ENCODE measurements at regions of chr2 and their contacts with region 1.

Region 1: GRCh38 chr2:44981136-44982108 is 27.8 kb downstream of the SIX2 start:
- DNase-seq: peak; percentile 18 to 62 (median 42)
- ATAC-seq: peak; percentile 64
- H3K4me3 ChIP-seq: no peak overlapping the region
- H3K4me3 Mint-ChIP-seq: peak overlapping the region in 1 of 10 donors; percentile 38
- H3K27ac ChIP-seq: no peak overlapping the region
- H3K27ac Mint-ChIP-seq: no peak overlapping the region
- H3K4me1 ChIP-seq: no peaks in the 10 kb centered on the region
- H3K4me1 Mint-ChIP-seq: peaks cover 0 to 6% (median 0%) of the 10 kb centered on the region in 7 donors
- H3K27me3 ChIP-seq: no peaks in the 10 kb centered on the region
- H3K27me3 Mint-ChIP-seq: peaks cover 19 to 30% (median 20%) of the 10 kb centered on the region in 5 donors

Region 2: DNA sequence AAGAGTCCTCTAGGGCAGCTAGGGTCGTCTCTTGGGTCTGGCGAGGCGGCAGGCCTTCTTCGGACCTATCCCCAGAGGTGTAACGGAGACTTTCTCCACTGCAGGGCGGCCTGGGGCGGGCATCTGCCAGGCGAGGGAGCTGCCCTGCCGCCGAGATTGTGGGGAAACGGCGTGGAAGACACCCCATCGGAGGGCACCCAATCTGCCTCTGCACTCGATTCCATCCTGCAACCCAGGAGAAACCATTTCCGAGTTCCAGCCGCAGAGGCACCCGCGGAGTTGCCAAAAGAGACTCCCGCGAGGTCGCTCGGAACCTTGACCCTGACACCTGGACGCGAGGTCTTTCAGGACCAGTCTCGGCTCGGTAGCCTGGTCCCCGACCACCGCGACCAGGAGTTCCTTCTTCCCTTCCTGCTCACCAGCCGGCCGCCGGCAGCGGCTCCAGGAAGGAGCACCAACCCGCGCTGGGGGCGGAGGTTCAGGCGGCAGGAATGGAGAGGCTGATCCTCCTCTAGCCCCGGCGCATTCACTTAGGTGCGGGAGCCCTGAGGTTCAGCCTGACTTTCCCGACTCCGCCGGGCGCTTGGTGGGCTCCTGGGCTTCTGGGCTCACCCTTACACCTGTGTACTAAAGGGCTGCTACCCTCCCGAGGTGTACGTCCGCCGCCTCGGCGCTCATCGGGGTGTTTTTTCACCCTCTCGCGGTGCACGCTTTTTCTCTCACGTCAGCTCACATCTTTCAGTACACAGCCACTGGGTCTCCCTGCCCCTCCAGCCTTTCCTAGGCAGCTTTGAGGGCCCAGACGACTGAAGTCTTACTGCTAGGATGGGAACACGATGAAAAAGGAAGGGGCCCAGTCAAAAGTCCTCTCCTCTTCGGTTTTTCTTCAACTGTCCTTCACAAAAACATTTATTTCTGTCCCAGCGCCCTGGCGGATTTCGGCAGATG is 19.8 kb after region 1 on chr2:
- CTCF ChIA-PET with region 1: no interaction called
- POLR2A ChIA-PET with region 1: no interaction called
- intact Hi-C with region 1: no loop called
- DNase-seq: no peak
- ATAC-seq: no peak
- H3K4me3 ChIP-seq: no peak overlapping the region
- H3K4me3 Mint-ChIP-seq: peak overlapping the region; percentile 23 to 74 (median 64)
- H3K27ac ChIP-seq: no peak overlapping the region
- H3K27ac Mint-ChIP-seq: no peak overlapping the region
- H3K4me1 ChIP-seq: peaks cover 0 to 4% of the 10 kb centered on the region in 2 donors
- H3K4me1 Mint-ChIP-seq: peaks cover 11 to 33% (median 23%) of the 10 kb centered on the region in 7 donors
- H3K27me3 ChIP-seq: peaks cover 0 to 3% of the 10 kb centered on the region in 2 donors
- H3K27me3 Mint-ChIP-seq: peaks cover 68 to 87% (median 76%) of the 10 kb centered on the region in 5 donors

Region 3: GRCh38 chr2:45494269-45494977 is 513.0 kb after region 1 on chr2:
- CTCF ChIA-PET with region 1: interaction called, 11 read pairs
- POLR2A ChIA-PET with region 1: no interaction called
- intact Hi-C with region 1: loop called in 1 of 2 experiments (anchors 1 kb)
- DNase-seq: peak in 6 of 9 donors; percentile 17 to 46 (median 28)
- ATAC-seq: peak; percentile 65
- H3K4me3 ChIP-seq: no peak overlapping the region
- H3K4me3 Mint-ChIP-seq: no peak overlapping the region
- H3K27ac ChIP-seq: no peak overlapping the region
- H3K27ac Mint-ChIP-seq: peak overlapping the region in 2 of 9 donors; percentile 23 to 33
- H3K4me1 ChIP-seq: no peaks in the 10 kb centered on the region
- H3K4me1 Mint-ChIP-seq: peaks cover 3 to 17% (median 10%) of the 10 kb centered on the region in 7 donors
- H3K27me3 ChIP-seq: no peaks in the 10 kb centered on the region
- H3K27me3 Mint-ChIP-seq: no peaks in the 10 kb centered on the region

Region 4: GRCh38 chr2:45578056-45578809 is 596.8 kb after region 1 on chr2:
- CTCF ChIA-PET with region 1: interaction called, 7 read pairs
- POLR2A ChIA-PET with region 1: no interaction called
- intact Hi-C with region 1: loop called in 1 of 2 experiments (anchors 1 kb)
- DNase-seq: peak in 7 of 9 donors; percentile 15 to 43 (median 27)
- ATAC-seq: peak; percentile 83
- H3K4me3 ChIP-seq: no peak overlapping the region
- H3K4me3 Mint-ChIP-seq: no peak overlapping the region
- H3K27ac ChIP-seq: no peak overlapping the region
- H3K27ac Mint-ChIP-seq: peak overlapping the region in 1 of 9 donors; percentile 12
- H3K4me1 ChIP-seq: no peaks in the 10 kb centered on the region
- H3K4me1 Mint-ChIP-seq: peaks cover 0 to 9% (median 4%) of the 10 kb centered on the region in 7 donors
- H3K27me3 ChIP-seq: no peaks in the 10 kb centered on the region
- H3K27me3 Mint-ChIP-seq: no peaks in the 10 kb centered on the region

Region 5: DNA sequence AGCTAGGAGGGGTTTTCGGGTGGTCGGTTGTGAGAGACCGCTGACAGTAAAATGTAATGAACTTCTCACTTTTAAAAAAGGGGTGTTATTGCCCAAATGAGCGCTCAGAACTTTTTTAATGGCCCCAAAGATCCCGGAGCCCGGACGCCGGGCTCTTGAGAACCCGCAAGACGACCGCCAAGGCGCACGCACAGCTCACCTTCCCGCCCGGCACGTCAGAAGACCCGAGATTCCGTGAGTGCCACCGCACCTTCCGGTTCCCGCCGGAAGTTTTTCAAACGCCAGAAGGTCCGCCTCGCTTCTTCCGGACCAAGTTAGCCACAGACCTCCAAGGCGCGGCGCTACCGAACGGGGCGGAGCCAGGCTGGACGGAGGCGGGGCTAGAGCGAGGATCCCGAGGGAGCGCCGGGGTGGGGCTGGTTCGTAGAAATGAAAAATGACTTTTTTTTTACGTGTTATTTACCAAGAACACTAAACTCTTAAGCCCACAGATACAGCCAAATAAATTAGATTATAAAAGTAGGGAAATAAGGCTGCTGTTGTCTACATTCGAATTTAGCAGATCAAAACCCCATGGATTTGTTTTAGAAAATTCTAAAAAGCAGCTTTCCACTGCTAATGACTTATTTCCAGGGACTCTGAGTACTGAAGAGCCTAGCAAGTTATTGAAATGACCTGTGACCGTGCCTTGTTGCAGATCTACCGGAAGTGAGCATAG is 629.8 kb after region 1 on chr2 and contains the start of gene SRBD1:
- CTCF ChIA-PET with region 1: no interaction called
- POLR2A ChIA-PET with region 1: no interaction called
- intact Hi-C with region 1: loop called in 1 of 2 experiments (anchors 1 kb)
- DNase-seq: peak; percentile 52 to 91 (median 75)
- ATAC-seq: peak; percentile 91
- H3K4me3 ChIP-seq: peak within 1 kb of the TSS; percentile 79
- H3K4me3 Mint-ChIP-seq: peak within 1 kb of the TSS; percentile 92 to 99 (median 96)
- H3K27ac ChIP-seq: peak within 1 kb of the TSS; percentile 78
- H3K27ac Mint-ChIP-seq: peak within 1 kb of the TSS; percentile 90 to 98 (median 96)
- H3K4me1 ChIP-seq: peaks cover 0 to 7% of the 10 kb centered on the region in 2 donors
- H3K4me1 Mint-ChIP-seq: peaks cover 13 to 47% (median 28%) of the 10 kb centered on the region in 7 donors
- H3K27me3 ChIP-seq: no peaks in the 10 kb centered on the region
- H3K27me3 Mint-ChIP-seq: no peaks in the 10 kb centered on the region
- total RNA-seq, gene SRBD1: 17.7 to 28.1 (median 23.3) TPM

Region 6: GRCh38 chr2:45643543-45644542 is 662.4 kb after region 1 on chr2:
- CTCF ChIA-PET with region 1: no interaction called
- POLR2A ChIA-PET with region 1: no interaction called
- intact Hi-C with region 1: loop called in 1 of 2 experiments (anchors 10 kb)
- DNase-seq: peak; percentile 46 to 86 (median 73)
- ATAC-seq: peak; percentile 99
- H3K4me3 ChIP-seq: peak overlapping the region; percentile 44
- H3K4me3 Mint-ChIP-seq: peak overlapping the region; percentile 16 to 67 (median 50)
- H3K27ac ChIP-seq: no peak overlapping the region
- H3K27ac Mint-ChIP-seq: peak overlapping the region in 2 of 9 donors; percentile 46 to 57
- H3K4me1 ChIP-seq: peaks cover 0 to 9% of the 10 kb centered on the region in 2 donors
- H3K4me1 Mint-ChIP-seq: peaks cover 0 to 18% (median 5%) of the 10 kb centered on the region in 7 donors
- H3K27me3 ChIP-seq: no peaks in the 10 kb centered on the region
- H3K27me3 Mint-ChIP-seq: peaks cover 11 to 37% (median 20%) of the 10 kb centered on the region in 5 donors

Measured in naive thymus-derived CD4-positive, alpha-beta T cell (primary cell).